ENCODE measurements at regions of chr10 and their contacts with region 1.

Region 1: GRCh38 chr10:100046021-100046486 is 35.6 kb downstream of the CPN1 start:
- DNase-seq: peak; percentile 85
- H3K4me3 ChIP-seq: no peak overlapping the region
- H3K27ac ChIP-seq: no peak overlapping the region
- H3K4me1 ChIP-seq: peaks cover 19% of the 10 kb centered on the region
- H3K27me3 ChIP-seq: no peaks in the 10 kb centered on the region
- CTCF ChIP-seq: peak; percentile 88 to 94
- POLR2A ChIP-seq: no peak

Region 2: GRCh38 chr10:99732033-99732912 is 313.8 kb before region 1 on chr10 and contains the starts of genes COX15 and CUTC:
- CTCF ChIA-PET with region 1: interaction called, 7 read pairs
- POLR2A ChIA-PET with region 1: no interaction called
- dilution Hi-C with region 1: no loop called
- intact Hi-C with region 1: loop called (anchors 5 kb)
- DNase-seq: peak; percentile 98
- H3K4me3 ChIP-seq: peak within 1 kb of the TSS; percentile 48 to 90 (median 65)
- H3K27ac ChIP-seq: peak within 1 kb of the TSS; percentile 53
- H3K4me1 ChIP-seq: peaks cover 15% of the 10 kb centered on the region
- H3K27me3 ChIP-seq: no peaks in the 10 kb centered on the region
- CTCF ChIP-seq: peak; percentile 33 to 54
- POLR2A ChIP-seq: peak; percentile 86
- total RNA-seq, gene COX15: 31.7 and 34.6 TPM in 2 replicates
- total RNA-seq, gene CUTC: 17.7 and 20.4 TPM in 2 replicates

Region 3: DNA sequence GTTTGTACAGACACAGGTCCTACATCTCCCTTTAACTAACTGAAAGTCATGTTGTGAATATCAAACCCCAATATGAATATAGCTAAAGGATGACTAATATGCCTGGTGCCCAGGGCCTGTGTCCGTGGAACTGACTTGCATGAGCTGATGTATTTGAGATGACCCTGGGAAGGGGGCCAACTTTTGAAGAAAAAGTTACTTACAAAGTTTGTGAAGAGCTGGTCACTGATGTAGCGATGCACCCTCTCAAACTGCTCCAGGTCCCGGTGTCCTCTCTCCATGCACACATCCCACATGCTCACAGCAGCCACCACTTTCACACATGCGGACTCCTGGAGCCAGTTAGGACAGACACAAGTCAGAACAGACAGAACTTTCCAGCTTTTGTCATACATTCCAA is 157.4 kb before region 1 on chr10:
- CTCF ChIA-PET with region 1: interaction called, 13 read pairs
- POLR2A ChIA-PET with region 1: no interaction called
- dilution Hi-C with region 1: no loop called
- intact Hi-C with region 1: no loop called
- DNase-seq: no peak
- H3K4me3 ChIP-seq: no peak overlapping the region
- H3K27ac ChIP-seq: no peak overlapping the region
- H3K4me1 ChIP-seq: no peaks in the 10 kb centered on the region
- H3K27me3 ChIP-seq: no peaks in the 10 kb centered on the region
- CTCF ChIP-seq: no peak
- POLR2A ChIP-seq: no peak

Region 4: DNA sequence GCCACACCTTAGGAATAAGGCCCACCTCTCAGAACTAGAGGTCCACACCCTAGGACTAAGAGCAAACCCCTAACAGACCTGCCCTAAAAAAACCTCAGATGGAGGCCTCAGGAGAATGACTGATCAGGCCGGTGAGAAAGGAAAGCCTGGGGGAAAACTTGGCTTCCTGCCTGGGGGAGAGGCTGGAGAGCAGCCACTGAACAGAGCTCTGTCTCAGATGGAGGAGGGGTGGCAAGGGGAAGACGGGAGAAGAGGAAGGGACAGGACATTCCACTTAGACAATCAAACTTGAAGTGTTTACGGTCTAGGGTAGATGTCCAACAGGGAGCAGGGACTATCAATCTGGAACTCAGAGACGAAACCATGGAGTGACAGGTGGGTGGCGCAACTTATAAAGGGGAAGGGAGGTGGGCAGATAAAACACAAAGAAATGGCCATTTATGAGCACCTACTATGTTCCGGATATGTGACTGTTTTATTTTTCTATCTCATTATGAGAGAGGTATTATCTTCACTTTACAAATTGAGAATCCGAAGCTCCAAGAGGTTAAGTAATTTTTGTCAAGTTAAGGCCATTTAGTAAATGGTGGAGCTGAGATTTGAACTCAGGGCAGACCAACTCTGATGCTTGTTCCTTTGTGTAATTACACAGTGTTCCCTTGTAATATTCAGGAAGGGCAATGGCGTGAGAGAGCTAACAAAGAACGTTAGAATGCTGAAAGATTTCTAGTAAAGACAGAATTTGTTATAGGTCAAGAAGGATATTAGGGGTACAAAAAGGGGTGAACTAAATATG is 118.9 kb before region 1 on chr10:
- CTCF ChIA-PET with region 1: interaction called, 24 read pairs
- POLR2A ChIA-PET with region 1: no interaction called
- dilution Hi-C with region 1: no loop called
- intact Hi-C with region 1: no loop called
- DNase-seq: peak; percentile 91
- H3K4me3 ChIP-seq: peak overlapping the region; percentile 40 to 64 (median 40)
- H3K27ac ChIP-seq: peak overlapping the region; percentile 73
- H3K4me1 ChIP-seq: peaks cover 77% of the 10 kb centered on the region
- H3K27me3 ChIP-seq: no peaks in the 10 kb centered on the region
- CTCF ChIP-seq: no peak
- POLR2A ChIP-seq: peak; percentile 78

Region 5: DNA sequence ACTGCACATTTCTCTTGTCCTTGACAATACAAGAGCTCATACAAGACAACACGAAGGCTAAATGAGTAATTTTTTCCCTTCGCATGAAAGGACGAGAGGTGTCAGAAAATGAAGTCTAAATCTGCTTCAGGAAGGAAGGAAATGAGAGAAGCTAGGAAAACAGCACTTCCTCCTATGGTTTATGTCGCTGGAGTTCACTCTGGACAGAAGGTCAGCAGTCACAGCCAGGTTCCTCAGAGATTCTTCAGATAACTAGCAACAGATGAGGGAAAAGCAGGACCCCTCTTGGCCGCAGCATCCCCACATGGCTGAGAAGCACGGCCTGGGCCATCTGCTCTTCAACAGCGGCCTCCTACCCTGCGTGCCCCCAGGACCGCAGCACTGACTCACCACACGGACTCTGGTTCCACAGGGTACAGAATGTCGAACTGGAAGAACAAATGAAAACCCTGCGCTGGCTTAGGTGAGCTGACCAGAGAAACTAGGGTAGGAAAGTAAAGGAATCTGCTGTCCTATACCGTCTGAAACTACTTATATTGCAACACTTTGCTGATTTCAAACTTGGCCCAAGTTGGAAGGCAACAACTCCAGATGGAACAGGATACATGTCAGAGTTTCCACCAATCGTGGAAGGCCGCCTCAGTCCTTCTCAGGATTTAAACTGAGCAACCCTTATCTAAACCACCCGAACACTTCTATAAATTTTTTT is 62.6 kb before region 1 on chr10:
- CTCF ChIA-PET with region 1: interaction called, 16 read pairs
- POLR2A ChIA-PET with region 1: no interaction called
- dilution Hi-C with region 1: no loop called
- intact Hi-C with region 1: no loop called
- DNase-seq: peak; percentile 90
- H3K4me3 ChIP-seq: peak overlapping the region in 1 of 3 experiments; percentile 6
- H3K27ac ChIP-seq: peak overlapping the region; percentile 82
- H3K4me1 ChIP-seq: peaks cover 65% of the 10 kb centered on the region
- H3K27me3 ChIP-seq: no peaks in the 10 kb centered on the region
- CTCF ChIP-seq: no peak
- POLR2A ChIP-seq: peak; percentile 70

Region 6: GRCh38 chr10:100185364-100186252 is 139.6 kb after region 1 on chr10 and contains the start of gene ERLIN1:
- CTCF ChIA-PET with region 1: interaction called, 4 read pairs
- POLR2A ChIA-PET with region 1: no interaction called
- dilution Hi-C with region 1: no loop called
- intact Hi-C with region 1: loop called (anchors 2 kb)
- DNase-seq: peak; percentile 95
- H3K4me3 ChIP-seq: peak within 1 kb of the TSS; percentile 51 to 89 (median 55)
- H3K27ac ChIP-seq: peak within 1 kb of the TSS; percentile 42
- H3K4me1 ChIP-seq: peaks cover 16% of the 10 kb centered on the region
- H3K27me3 ChIP-seq: no peaks in the 10 kb centered on the region
- CTCF ChIP-seq: peak in 1 of 2 donors; percentile 8
- POLR2A ChIP-seq: peak; percentile 88
- total RNA-seq, gene ERLIN1: 51.0 and 51.9 TPM in 2 replicates

Measured in endothelial cell of umbilical vein (primary cell).